ENCODE measurements at regions of chr12 and their contacts with region 1.

Region 1: GRCh38 chr12:11130999-11131398 is 3.4 kb downstream of the TAS2R30 start:
- DNase-seq: no peak
- ATAC-seq: no peak
- H3K4me3 ChIP-seq: no peak overlapping the region
- H3K27ac ChIP-seq: no peak overlapping the region
- H3K4me1 ChIP-seq: no peaks in the 10 kb centered on the region
- H3K27me3 ChIP-seq: no peaks in the 10 kb centered on the region
- CTCF ChIP-seq: no peak
- EP300 ChIP-seq: no peak
- POLR2A ChIP-seq: no peak
- RAD21 ChIP-seq: no peak

Region 2: DNA sequence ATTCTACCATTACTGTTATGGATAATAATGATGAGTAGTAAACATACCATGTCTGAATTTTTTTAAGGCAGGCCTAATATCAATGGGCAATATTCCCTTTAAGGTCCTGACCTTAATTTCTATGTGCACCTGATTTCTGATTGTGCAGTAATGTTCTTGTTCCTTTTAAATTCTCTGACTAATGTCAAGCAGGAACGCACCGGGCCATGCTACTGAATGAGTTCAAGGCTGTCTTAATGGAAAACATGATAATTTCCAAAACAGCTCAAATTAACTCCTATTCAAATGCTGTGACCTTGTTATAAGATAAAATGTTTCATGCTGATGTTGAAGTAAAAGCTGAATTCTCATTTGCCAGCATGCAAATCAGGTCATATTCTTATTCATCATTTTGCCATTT is 75.7 kb before region 1 on chr12:
- CTCF ChIA-PET with region 1: no interaction called
- POLR2A ChIA-PET with region 1: interaction called, 3 read pairs
- in situ Hi-C with region 1: no loop called
- intact Hi-C with region 1: loop called (anchors 2 kb)
- DNase-seq: no peak
- ATAC-seq: no peak
- H3K4me3 ChIP-seq: no peak overlapping the region
- H3K27ac ChIP-seq: no peak overlapping the region
- H3K4me1 ChIP-seq: no peaks in the 10 kb centered on the region
- H3K27me3 ChIP-seq: no peaks in the 10 kb centered on the region
- CTCF ChIP-seq: no peak
- EP300 ChIP-seq: no peak
- POLR2A ChIP-seq: no peak
- RAD21 ChIP-seq: no peak

Measured in K562 (cell line).